SK-N-SH (cell line): ENCODE measurements at regions of chr15 and their contacts with region 1.

Region 1: DNA sequence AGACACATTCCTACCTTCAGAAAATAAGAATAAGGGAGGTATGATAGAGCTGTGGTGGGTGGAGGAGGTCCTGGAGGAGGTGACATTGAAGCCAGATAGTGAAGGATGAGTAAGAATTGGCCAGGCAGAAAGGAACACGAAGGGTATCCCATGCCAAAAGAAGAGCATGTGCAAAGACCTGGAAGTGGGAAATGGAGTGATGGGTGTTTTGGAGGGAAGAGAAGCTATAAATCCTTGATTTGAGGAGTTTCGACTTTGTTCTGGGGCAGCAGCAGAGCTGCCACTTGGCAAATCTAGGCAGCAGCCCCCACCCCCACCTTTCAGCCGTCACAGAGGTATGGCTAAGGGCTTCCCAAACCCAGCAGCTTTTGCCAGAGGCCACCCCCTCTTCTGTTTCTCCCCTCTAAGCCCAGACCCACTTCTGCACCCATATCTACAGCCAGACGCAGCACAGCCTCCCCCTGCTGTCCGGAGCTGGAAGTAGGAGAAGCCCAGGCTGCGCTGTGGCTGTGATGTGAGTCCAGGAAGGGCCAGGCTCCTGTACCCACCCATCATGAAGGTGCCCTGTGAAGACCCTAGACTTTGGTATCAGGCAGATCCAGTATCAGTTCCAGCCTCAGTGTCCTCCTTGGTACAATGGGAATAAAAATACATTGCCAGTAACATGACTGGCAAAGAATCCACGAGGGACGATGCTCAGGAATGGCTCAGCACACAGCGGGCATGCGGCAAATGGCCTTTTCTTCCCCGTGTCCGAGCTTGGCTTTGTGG is 188.7 kb upstream of the LINGO1 start:
- DNase-seq: peak; percentile 88
- H3K4me3 ChIP-seq: no peak overlapping the region; a peak in 1 of 4 replicates
- H3K27ac ChIP-seq: no peak overlapping the region
- H3K4me1 ChIP-seq: peaks cover 0 to 17% of the 10 kb centered on the region in 2 experiments; a peak in 1 of 4 replicates
- H3K27me3 ChIP-seq: peaks cover 38% of the 10 kb centered on the region
- CTCF ChIP-seq: peak; percentile 80
- EP300 ChIP-seq: no peak
- RAD21 ChIP-seq: peak; percentile 92

Region 2: DNA sequence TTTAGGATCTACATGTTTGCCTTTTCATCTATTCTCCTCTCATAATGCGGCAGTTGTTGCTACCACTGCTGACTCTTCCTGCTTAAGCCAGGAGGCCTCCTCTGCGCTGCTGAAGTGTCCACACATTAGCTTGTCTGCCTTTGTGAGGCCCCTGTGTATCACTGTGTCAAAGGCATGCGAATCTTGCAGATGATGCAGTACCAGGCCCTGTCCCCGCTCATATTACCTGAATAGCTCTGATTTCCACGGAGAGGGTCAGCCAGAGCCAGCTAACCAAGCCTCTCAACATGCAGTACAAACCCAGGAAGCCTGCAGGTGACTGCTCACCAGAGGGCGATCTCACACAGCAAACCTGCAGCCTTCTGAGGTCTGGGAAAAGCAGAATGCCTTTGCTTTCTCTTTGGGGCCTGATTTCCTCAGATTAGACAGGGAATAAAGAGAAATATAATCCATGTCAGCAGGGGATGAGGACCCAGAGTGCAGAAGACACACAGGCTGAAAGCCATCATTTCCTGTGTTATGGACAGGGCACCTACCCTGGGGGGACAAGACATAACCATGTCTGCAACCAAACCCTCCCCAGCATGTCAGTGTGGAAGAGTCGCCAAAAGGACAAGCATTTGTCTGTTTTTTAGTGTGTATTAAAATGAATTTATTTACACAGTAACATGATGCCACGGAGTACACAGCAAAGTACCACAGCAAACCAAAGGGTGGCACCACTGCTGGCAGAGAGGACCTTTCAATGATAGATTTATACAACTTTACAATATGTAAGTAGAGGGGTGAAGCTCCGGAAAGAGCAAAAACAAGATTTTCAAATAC is 713.6 kb before region 1 on chr15:
- CTCF ChIA-PET with region 1: interaction called, 10 read pairs
- POLR2A ChIA-PET with region 1: no interaction called
- DNase-seq: peak; percentile 72
- H3K4me3 ChIP-seq: no peak overlapping the region
- H3K27ac ChIP-seq: peak overlapping the region in 1 of 2 experiments; percentile 22; a peak in 1 of 4 replicates
- H3K4me1 ChIP-seq: peaks cover 0 to 17% of the 10 kb centered on the region in 2 experiments; a peak in 2 of 4 replicates
- H3K27me3 ChIP-seq: no peaks in the 10 kb centered on the region
- CTCF ChIP-seq: peak; percentile 68
- EP300 ChIP-seq: no peak
- RAD21 ChIP-seq: peak; percentile 89

Region 3: DNA sequence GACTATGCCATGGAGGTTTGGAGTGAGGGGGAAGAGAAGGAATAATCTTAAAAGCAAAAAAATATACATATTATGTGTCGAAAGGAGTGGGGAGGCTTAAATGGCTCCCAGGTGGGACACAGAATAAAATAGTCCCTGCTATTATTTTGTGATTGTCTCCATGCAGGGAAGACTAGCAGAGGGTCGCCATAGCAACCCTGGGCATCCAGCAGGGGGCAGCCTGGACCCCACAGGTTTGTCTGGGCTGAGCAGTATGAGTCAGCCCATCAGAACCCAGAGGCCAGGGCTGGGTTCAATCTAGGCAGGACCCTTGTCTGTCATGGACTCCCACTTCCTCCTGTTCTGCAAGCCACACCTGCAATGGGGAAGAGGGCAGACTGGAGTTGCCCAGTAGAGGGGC is 171.1 kb before region 1 on chr15:
- CTCF ChIA-PET with region 1: interaction called, 230 read pairs
- POLR2A ChIA-PET with region 1: no interaction called
- DNase-seq: peak; percentile 70
- H3K4me3 ChIP-seq: no peak overlapping the region
- H3K27ac ChIP-seq: no peak overlapping the region
- H3K4me1 ChIP-seq: peaks cover 0 to 9% of the 10 kb centered on the region in 2 experiments; a peak in 1 of 4 replicates
- H3K27me3 ChIP-seq: peaks cover 32% of the 10 kb centered on the region; the same call in 1 of the 2 replicates
- CTCF ChIP-seq: peak; percentile 45
- EP300 ChIP-seq: no peak
- RAD21 ChIP-seq: peak; percentile 41

Region 4: DNA sequence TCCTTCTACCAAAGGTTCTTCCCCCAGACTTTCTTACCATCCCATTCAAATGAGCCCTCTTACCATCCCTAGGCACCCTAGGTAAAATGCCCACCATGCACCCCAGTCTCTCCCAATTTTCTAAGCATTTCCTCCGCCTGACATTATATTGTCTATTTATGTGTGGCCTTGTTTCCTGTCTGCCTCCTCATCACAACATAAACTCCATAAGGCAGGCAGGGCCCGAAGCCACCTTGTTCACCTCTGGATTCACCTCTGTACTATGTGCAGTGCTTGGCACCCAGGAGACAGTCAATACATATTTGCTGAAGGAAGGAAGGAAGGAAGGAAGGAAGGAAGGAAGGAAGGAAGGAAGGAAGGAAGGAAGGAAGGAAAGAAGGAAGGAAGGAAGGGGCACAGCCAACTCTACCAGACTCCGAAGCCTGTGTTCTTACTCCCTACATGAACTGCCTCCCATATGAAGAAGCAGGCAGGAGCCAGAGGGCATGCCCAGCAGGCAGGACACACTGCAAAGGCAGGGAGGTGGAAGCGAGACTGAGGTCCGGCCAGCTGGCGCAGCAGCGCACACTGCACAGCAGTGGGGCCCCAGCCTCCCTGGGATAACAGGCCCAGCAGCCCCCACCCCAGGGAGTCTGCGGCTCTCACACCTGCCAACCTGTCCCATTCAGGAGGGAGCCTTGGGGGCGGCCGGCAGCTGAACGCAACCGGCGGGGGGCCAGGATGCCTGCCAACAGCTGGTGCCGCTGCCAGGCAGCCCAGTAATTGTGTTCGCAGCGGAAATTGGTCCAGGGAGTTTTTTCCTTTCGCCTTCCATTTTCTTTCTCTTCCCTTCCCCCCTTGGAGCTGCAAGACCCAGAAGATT is 82.7 kb before region 1 on chr15:
- CTCF ChIA-PET with region 1: interaction called, 16 read pairs
- POLR2A ChIA-PET with region 1: no interaction called
- DNase-seq: no peak
- H3K4me3 ChIP-seq: no peak overlapping the region
- H3K27ac ChIP-seq: no peak overlapping the region
- H3K4me1 ChIP-seq: peaks cover 0 to 5% of the 10 kb centered on the region in 2 experiments; a peak in 2 of 4 replicates
- H3K27me3 ChIP-seq: peaks cover 28% of the 10 kb centered on the region
- CTCF ChIP-seq: no peak
- EP300 ChIP-seq: no peak
- RAD21 ChIP-seq: no peak

Region 5: DNA sequence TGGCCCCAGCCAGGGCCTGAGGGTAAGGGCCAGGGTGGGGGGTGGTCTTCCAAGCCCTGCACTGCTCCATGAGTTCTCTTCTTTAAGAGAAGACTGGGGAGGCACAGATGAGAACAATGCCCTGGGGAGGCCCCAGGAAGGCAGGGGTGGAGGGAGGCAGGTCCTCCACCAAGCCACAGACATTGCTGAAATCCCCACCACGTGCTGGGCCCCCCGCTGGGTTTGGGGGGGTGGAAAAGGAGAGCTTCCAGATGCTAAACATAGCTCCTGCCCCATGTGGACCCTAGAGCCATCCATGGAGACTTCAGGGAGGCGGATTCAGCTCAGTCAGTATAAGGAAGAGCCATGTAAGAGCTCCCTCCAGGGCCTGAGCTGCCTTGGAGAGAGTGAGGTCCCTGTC is 30.9 kb before region 1 on chr15:
- CTCF ChIA-PET with region 1: interaction called, 14 read pairs
- POLR2A ChIA-PET with region 1: no interaction called
- DNase-seq: no peak
- H3K4me3 ChIP-seq: no peak overlapping the region
- H3K27ac ChIP-seq: no peak overlapping the region
- H3K4me1 ChIP-seq: no peaks in the 10 kb centered on the region
- H3K27me3 ChIP-seq: peaks cover 7% of the 10 kb centered on the region; the same call in 1 of the 2 replicates
- CTCF ChIP-seq: no peak
- EP300 ChIP-seq: no peak
- RAD21 ChIP-seq: no peak

Region 6: GRCh38 chr15:77836121-77836692 is 14.8 kb after region 1 on chr15:
- CTCF ChIA-PET with region 1: interaction called, 55 read pairs
- POLR2A ChIA-PET with region 1: no interaction called
- DNase-seq: peak; percentile 79
- H3K4me3 ChIP-seq: no peak overlapping the region
- H3K27ac ChIP-seq: no peak overlapping the region
- H3K4me1 ChIP-seq: peaks cover 4 to 16% of the 10 kb centered on the region in 2 experiments; a peak in 2 of 4 replicates
- H3K27me3 ChIP-seq: peaks cover 14% of the 10 kb centered on the region; the same call in 1 of the 2 replicates
- CTCF ChIP-seq: no peak
- EP300 ChIP-seq: no peak
- RAD21 ChIP-seq: no peak

Region 7: GRCh38 chr15:78049691-78050440 is 228.5 kb after region 1 on chr15:
- CTCF ChIA-PET with region 1: no interaction called
- POLR2A ChIA-PET with region 1: no interaction called
- DNase-seq: no peak
- H3K4me3 ChIP-seq: no peak overlapping the region
- H3K27ac ChIP-seq: peak overlapping the region; percentile 53 to 63; a peak in 3 of 4 replicates
- H3K4me1 ChIP-seq: peaks cover 44 to 50% of the 10 kb centered on the region in 2 experiments
- H3K27me3 ChIP-seq: no peaks in the 10 kb centered on the region
- CTCF ChIP-seq: no peak
- EP300 ChIP-seq: peak in 1 of 2 experiments; percentile 79; a peak in 1 of 4 replicates
- RAD21 ChIP-seq: no peak